Activated CD8-positive, alpha-beta T cell treated with anti-CD3 and anti-CD28 coated beads for 36 hours (primary cell): ENCODE measurements at regions of chr11 and their contacts with region 1.

Region 1: DNA sequence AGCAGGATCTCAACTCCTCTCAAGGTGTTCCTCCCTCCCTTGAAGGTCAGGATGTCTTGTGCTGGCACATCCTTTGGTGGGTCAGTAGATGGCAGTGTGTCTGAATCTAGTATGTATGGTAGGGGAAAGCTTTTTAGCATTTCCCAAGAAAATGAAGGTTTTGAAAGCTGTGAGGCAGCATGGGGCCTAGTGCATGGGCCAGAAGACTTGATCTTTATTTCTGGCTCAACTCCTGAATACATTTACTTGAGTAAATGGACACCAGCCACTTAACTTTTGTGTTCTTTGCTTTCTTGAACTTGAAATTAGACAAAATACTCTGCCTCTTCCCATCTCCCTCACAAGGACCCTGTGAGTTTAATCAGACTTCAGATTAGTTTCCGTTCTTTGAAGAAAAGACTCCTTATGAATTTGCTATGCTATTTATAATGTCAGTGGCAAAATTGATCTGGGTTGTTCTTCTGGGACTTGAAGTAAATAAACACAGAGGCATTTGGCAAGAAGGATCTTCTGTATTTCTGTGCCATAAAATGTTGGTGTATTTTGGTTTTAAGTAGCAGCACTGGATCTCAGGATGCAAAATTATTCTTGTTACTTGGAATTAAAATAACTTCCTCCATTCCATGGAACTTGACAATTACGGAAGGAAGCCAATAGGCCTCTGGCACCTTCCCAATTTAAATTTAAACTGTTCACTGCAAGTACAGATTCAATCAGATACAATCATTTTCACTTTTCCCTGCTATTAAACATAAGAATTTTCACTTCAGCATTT is 288.8 kb downstream of the CASP12 start:
- DNase-seq: peak; percentile 29
- ATAC-seq: peak; percentile 94
- H3K4me3 Mint-ChIP-seq: no peak overlapping the region
- H3K27ac Mint-ChIP-seq: no peak overlapping the region
- H3K4me1 Mint-ChIP-seq: peaks cover 22% of the 10 kb centered on the region
- H3K27me3 Mint-ChIP-seq: no peaks in the 10 kb centered on the region
- CTCF ChIP-seq: peak; percentile 72

Region 2: GRCh38 chr11:104570078-104570701 is 39.3 kb before region 1 on chr11:
- CTCF ChIA-PET with region 1: no interaction called
- POLR2A ChIA-PET with region 1: no interaction called
- intact Hi-C with region 1: no loop called
- DNase-seq: no peak
- ATAC-seq: no peak
- H3K4me3 Mint-ChIP-seq: no peak overlapping the region
- H3K27ac Mint-ChIP-seq: no peak overlapping the region
- H3K4me1 Mint-ChIP-seq: no peaks in the 10 kb centered on the region
- H3K27me3 Mint-ChIP-seq: no peaks in the 10 kb centered on the region
- CTCF ChIP-seq: no peak

Region 3: GRCh38 chr11:104876861-104877431 is 267.4 kb after region 1 on chr11:
- CTCF ChIA-PET with region 1: no interaction called
- POLR2A ChIA-PET with region 1: no interaction called
- intact Hi-C with region 1: loop called (anchors 10 kb)
- DNase-seq: peak; percentile 12
- ATAC-seq: peak; percentile 86
- H3K4me3 Mint-ChIP-seq: peak overlapping the region; percentile 14
- H3K27ac Mint-ChIP-seq: peak overlapping the region; percentile 84
- H3K4me1 Mint-ChIP-seq: peaks cover 38% of the 10 kb centered on the region
- H3K27me3 Mint-ChIP-seq: no peaks in the 10 kb centered on the region
- CTCF ChIP-seq: no peak